Thyroid gland (tissue), 4 donors: ENCODE measurements at regions of chr5 and their contacts with region 1.

Region 1: GRCh38 chr5:55540024-55540423 is 5.3 kb upstream of the PLPP1 start:
- DNase-seq: no peak
- H3K4me3 ChIP-seq: no peak overlapping the region
- H3K27ac ChIP-seq: no peak overlapping the region
- H3K4me1 ChIP-seq: no peaks in the 10 kb centered on the region
- H3K27me3 ChIP-seq: no peaks in the 10 kb centered on the region
- CTCF ChIP-seq: no peak
- POLR2A ChIP-seq: no peak

Region 2: GRCh38 chr5:55331321-55331720 is 208.7 kb before region 1 on chr5:
- intact Hi-C with region 1: no loop called
- DNase-seq: no peak
- H3K4me3 ChIP-seq: no peak overlapping the region
- H3K27ac ChIP-seq: no peak overlapping the region
- H3K4me1 ChIP-seq: no peaks in the 10 kb centered on the region
- H3K27me3 ChIP-seq: no peaks in the 10 kb centered on the region
- CTCF ChIP-seq: no peak
- POLR2A ChIP-seq: no peak

Region 3: DNA sequence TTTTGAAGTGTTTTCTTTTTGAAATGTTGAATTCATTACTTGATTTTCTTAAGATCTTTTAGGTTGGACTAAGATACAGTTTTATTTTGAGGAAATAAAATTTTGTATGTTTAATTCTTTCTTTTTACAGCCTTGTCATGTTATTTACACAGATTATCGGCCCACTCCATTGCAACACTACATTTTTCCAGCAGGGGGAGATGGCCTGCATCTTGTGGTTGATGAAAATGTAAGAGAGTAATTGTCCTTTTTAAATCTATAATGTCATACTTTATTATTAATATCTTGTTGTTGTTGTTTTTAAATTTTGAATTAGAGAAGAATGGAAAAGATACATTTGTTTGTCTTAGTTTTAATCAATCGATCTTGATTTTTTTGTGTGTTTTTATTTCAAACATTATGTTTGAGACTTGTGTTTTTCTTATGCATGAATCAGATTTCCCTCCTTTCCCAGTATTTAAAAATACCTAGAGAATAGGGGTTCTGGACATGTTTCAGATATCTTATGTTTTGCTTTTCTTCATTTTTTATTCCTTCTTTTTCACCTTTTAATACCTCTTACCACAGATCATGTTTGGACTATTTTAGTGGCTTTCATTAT is 195.5 kb before region 1 on chr5:
- intact Hi-C with region 1: loop called (anchors 10 kb)
- DNase-seq: peak; percentile 67 to 68
- H3K4me3 ChIP-seq: no peak overlapping the region
- H3K27ac ChIP-seq: no peak overlapping the region
- H3K4me1 ChIP-seq: no peaks in the 10 kb centered on the region
- H3K27me3 ChIP-seq: no peaks in the 10 kb centered on the region
- CTCF ChIP-seq: peak; percentile 57 to 90 (median 82)
- POLR2A ChIP-seq: no peak